ENCODE measurements at regions of chr19 and their contacts with region 1.

Region 1: DNA sequence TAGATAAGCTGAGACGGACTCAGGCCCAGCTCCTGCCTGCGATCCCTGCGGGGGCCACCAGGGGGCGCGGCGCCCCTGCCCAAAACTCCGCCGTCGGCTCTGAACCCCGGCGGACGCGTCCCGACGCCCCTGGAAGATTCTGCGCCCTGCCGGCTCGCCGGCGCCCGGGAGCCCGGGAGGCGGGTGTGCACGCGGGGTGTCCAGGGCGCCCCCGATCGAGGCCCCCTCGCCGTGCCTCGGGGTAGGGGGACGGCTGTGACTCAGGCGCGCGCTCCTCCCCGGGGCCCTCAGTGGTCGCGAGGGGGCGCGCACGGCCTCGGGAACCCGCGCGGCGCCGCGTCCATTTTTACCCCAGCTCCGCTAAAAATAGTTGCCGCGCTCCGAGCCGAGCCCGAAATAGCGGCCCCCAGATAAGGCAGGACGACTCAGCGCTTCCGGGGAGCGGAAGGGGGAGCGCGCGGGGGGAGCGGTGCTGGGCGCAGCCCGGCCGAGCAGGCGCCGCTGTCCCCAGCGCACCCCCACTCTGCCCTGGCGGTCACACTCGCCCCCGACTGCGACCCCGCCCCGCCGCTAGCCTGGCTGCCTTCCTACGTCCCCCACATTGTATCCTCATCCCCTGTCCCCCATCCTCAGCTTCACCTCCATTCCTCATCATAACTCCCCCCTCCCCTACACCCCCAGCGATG is 16.0 kb upstream of the ERCC1 start:
- DNase-seq: peak; percentile 89 to 94 (median 92)
- ATAC-seq: peak; percentile 52 to 84 (median 67)
- H3K4me3 ChIP-seq: peak overlapping the region; percentile 57 to 88 (median 69)
- H3K27ac ChIP-seq: peak overlapping the region; percentile 54 to 98 (median 95)
- H3K4me1 ChIP-seq: peaks cover 0 to 39% (median 22%) of the 10 kb centered on the region in 12 donors
- H3K27me3 ChIP-seq: no peaks in the 10 kb centered on the region
- CTCF ChIP-seq: peak; percentile 97 to 100 (median 100)
- POLR2A ChIP-seq: peak in 1 of 2 donors; percentile 52

Region 2: GRCh38 chr19:45376045-45376724 is 63.5 kb before region 1 on chr19:
- intact Hi-C with region 1: no loop called
- DNase-seq: peak in 4 of 5 donors; percentile 59 to 66 (median 60)
- ATAC-seq: peak; percentile 42 to 78 (median 65)
- H3K4me3 ChIP-seq: no peak overlapping the region
- H3K27ac ChIP-seq: peak overlapping the region in 8 of 12 donors; percentile 2 to 61 (median 47)
- H3K4me1 ChIP-seq: peaks cover 0 to 11% (median 3%) of the 10 kb centered on the region in 12 donors
- H3K27me3 ChIP-seq: no peaks in the 10 kb centered on the region
- CTCF ChIP-seq: no peak
- POLR2A ChIP-seq: no peak

Region 3: DNA sequence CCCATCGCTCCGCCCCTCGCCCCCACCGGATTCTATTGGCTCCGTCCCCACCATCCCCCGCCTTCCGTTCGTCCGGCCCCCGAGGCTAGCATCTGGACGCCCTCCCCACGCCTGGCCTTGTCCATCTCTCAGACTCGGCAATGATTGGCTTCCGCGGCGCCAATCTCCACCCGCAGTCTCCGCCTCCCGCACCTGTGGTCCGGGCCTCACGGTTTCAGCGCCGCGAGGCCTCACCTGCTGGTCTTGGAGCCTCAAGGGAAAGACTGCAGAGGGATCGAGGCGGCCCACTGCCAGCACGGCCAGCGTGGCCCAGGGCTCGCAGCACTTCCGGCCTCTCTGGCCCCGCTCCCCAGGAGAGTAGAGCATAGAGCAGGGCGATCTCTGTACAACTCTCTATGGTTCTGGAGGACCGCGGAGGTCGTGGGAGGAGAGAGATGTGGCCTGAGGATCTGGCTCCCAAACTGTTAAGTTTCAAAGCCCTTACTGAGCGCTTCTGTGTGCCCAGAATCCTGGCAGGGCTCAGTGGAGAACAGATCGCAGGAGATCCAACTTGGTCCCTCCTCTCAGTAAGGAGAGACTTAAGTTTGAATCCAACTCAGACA is 16.0 kb before region 1 on chr19 and contains the start of gene ERCC1:
- intact Hi-C with region 1: loop called in 1 of 10 experiments (anchors 1 kb)
- DNase-seq: peak; percentile 94 to 97 (median 95)
- ATAC-seq: peak; percentile 76 to 89 (median 86)
- H3K4me3 ChIP-seq: peak within 1 kb of the TSS; percentile 38 to 83 (median 70)
- H3K27ac ChIP-seq: peak within 1 kb of the TSS; percentile 66 to 98 (median 92)
- H3K4me1 ChIP-seq: peaks cover 2 to 73% (median 32%) of the 10 kb centered on the region in 12 donors
- H3K27me3 ChIP-seq: peaks cover 0 to 4% (median 0%) of the 10 kb centered on the region in 9 donors
- CTCF ChIP-seq: no peak
- POLR2A ChIP-seq: peak in 1 of 2 donors; percentile 29
- total RNA-seq, gene ERCC1: 104 to 156 (median 121) TPM

Region 4: GRCh38 chr19:45469132-45469944 is 29.6 kb after region 1 on chr19:
- intact Hi-C with region 1: loop called in 1 of 10 experiments (anchors 2 kb)
- DNase-seq: peak; percentile 94 to 97 (median 95)
- ATAC-seq: peak; percentile 89 to 92 (median 90)
- H3K4me3 ChIP-seq: peak overlapping the region; percentile 51 to 89 (median 72)
- H3K27ac ChIP-seq: peak overlapping the region; percentile 80 to 99 (median 95)
- H3K4me1 ChIP-seq: peaks cover 5 to 40% (median 26%) of the 10 kb centered on the region in 12 donors
- H3K27me3 ChIP-seq: peaks cover 0 to 15% (median 0%) of the 10 kb centered on the region in 9 donors
- CTCF ChIP-seq: peak in 3 of 12 donors; percentile 7 to 23 (median 15)
- POLR2A ChIP-seq: peak; percentile 50 to 97

Region 5: DNA sequence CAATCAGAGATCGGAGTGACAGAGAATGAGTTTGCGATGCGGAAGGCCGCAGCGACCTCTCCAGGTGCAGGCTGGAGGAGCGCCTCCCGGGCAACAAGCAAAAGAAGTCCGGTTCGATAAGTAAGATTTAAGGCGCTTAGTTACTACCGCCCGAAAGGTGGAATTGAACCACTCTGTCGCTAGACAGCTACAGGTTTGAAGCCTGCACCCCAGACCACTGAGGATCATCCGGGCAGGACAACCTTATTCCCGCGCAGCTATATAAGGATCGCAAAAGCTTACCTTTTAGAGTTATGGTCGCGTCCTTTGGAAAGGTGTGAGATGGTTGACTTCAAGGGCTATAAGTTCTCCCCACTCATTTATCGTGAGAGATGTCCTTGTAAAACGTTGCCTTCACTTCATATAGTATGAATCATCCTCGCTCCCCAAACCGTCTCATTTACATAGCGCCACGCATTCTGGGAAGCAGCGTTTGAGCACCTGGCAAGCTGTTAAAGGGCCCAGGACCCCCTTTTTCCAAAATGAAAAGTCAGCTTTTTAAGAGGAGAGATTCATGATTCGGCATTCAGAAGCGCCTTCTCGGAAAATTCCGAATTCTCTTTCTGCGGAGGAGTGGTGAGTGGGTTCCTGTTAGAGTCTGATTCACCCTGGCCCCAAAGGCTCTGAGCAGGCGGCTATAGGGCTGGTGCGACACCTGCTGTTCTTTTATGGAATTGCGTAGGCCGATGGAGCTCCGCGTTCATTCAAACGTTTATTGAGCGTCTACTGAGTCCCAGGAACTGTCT is 38.9 kb after region 1 on chr19:
- intact Hi-C with region 1: loop called (anchors 1 to 2 kb)
- DNase-seq: peak; percentile 81 to 87 (median 83)
- ATAC-seq: peak; percentile 94 to 98 (median 96)
- H3K4me3 ChIP-seq: peak overlapping the region; percentile 28 to 68 (median 54)
- H3K27ac ChIP-seq: peak overlapping the region; percentile 91 to 99 (median 96)
- H3K4me1 ChIP-seq: peaks cover 0 to 28% (median 9%) of the 10 kb centered on the region in 12 donors
- H3K27me3 ChIP-seq: peaks cover 0 to 8% (median 0%) of the 10 kb centered on the region in 9 donors
- CTCF ChIP-seq: peak; percentile 95 to 99 (median 97)
- POLR2A ChIP-seq: peak in 1 of 2 donors; percentile 27

Region 6: DNA sequence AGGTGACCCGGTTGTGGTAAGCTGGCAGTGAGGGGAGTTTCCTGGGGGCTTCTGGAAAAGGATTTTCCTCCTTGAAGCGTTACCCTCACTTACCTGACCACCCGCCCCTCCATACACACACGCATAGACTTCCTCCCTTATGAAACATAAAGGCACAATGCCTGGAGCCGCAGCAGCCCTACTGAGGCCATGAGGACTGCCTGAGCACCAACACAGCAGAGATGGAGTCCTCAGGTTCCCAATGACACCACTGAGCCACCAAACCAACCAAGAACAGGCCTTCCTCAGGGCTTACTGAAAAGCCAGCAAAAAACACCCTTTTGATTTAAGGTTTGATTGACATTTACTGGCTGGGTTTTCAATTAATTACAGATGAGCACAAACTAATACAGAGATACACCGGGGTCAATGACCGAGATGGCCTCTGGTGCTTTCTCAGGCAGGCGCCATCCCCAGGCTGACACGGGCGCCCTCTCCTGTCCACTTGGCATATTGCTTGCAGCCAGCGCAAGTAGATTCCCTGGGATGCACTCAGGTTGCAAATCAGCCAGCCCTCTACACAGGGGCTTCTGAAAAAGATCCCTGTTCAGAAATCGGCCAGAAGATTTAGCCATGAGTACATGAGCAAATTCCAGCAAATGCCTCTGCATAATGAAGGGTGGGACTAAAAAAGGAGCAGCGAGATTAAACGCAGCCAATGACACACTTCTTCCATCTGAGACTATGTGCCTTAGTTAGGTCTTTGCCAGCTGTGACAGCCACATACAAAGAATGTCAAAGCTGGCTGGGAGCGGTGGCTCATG is 130.1 kb after region 1 on chr19:
- intact Hi-C with region 1: loop called in 1 of 10 experiments (anchors 10 kb)
- DNase-seq: peak; percentile 51 to 83 (median 71)
- ATAC-seq: peak; percentile 64 to 76 (median 70)
- H3K4me3 ChIP-seq: no peak overlapping the region
- H3K27ac ChIP-seq: peak overlapping the region in 11 of 12 donors; percentile 19 to 83 (median 64)
- H3K4me1 ChIP-seq: peaks cover 0 to 50% (median 20%) of the 10 kb centered on the region in 12 donors
- H3K27me3 ChIP-seq: no peaks in the 10 kb centered on the region
- CTCF ChIP-seq: peak; percentile 59 to 84 (median 73)
- POLR2A ChIP-seq: no peak